Calu3 (cell line): ENCODE measurements at regions of chr13 and their contacts with region 1.

Region 1: GRCh38 chr13:75440100-75440499 is 41.9 kb downstream of the TBC1D4 start:
- DNase-seq: no peak
- H3K4me3 Mint-ChIP-seq: no peak overlapping the region
- H3K27ac Mint-ChIP-seq: no peak overlapping the region
- H3K4me1 Mint-ChIP-seq: no peaks in the 10 kb centered on the region
- H3K27me3 Mint-ChIP-seq: no peaks in the 10 kb centered on the region
- CTCF ChIP-seq: no peak

Region 2: DNA sequence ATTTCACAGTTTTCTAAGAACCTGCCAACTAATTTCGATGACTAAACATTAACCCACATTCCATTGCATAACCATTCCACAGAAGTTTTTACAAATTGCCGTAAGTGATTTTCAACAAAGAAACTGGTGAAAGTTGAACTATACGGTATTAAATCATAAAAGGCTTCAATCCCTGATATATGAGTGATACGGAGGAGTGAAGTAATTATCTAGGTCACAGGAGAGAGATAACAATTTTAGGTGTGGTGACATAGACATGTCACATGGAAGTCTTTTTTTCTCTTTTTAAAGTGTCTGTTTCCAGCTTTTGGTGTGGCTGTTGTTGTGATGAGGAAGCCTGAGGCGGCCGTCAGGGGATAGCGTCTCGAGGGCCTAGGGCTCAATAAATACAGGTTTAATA is 12.5 kb after region 1 on chr13:
- CTCF ChIA-PET with region 1: no interaction called
- intact Hi-C with region 1: loop called (anchors 1 kb)
- DNase-seq: no peak
- H3K4me3 Mint-ChIP-seq: peak overlapping the region; percentile 38
- H3K27ac Mint-ChIP-seq: no peak overlapping the region
- H3K4me1 Mint-ChIP-seq: no peaks in the 10 kb centered on the region
- H3K27me3 Mint-ChIP-seq: no peaks in the 10 kb centered on the region
- CTCF ChIP-seq: no peak

Region 3: DNA sequence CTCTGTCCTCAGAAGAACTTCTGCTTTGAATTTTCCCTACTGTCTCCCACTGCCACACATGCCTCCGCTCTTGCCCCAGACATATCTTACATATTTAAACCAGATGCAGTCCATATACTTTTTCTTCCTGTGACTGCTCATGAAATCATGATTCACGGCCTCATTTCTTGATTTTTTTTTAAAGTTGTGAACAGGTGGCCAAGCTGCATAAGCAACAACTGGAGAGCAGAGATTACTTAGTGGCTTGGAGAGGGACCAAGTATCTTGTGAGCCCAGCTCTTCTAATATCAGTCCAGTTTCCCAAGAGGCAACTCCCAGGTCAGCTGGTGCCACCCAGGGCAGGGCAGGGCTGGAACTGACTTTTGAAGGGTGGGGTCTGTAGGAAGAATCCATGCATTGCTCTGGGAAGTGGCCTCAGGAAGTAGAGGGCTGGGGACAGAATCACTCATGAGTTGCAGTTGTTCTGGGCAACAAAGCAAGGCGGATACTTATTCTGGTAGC is 348.4 kb after region 1 on chr13:
- CTCF ChIA-PET with region 1: no interaction called
- intact Hi-C with region 1: no loop called
- DNase-seq: no peak
- H3K4me3 Mint-ChIP-seq: no peak overlapping the region
- H3K27ac Mint-ChIP-seq: no peak overlapping the region
- H3K4me1 Mint-ChIP-seq: peaks cover 14% of the 10 kb centered on the region
- H3K27me3 Mint-ChIP-seq: no peaks in the 10 kb centered on the region
- CTCF ChIP-seq: no peak